BJ (cell line): ENCODE measurements at regions of chr10 and their contacts with region 1.

Region 1: GRCh38 chr10:48608279-48608681 is 3.4 kb upstream of the ARHGAP22 start:
- DNase-seq: no peak
- H3K4me3 ChIP-seq: no peak overlapping the region
- H3K27me3 ChIP-seq: no peaks in the 10 kb centered on the region
- CTCF ChIP-seq: peak; percentile 80

Region 2: DNA sequence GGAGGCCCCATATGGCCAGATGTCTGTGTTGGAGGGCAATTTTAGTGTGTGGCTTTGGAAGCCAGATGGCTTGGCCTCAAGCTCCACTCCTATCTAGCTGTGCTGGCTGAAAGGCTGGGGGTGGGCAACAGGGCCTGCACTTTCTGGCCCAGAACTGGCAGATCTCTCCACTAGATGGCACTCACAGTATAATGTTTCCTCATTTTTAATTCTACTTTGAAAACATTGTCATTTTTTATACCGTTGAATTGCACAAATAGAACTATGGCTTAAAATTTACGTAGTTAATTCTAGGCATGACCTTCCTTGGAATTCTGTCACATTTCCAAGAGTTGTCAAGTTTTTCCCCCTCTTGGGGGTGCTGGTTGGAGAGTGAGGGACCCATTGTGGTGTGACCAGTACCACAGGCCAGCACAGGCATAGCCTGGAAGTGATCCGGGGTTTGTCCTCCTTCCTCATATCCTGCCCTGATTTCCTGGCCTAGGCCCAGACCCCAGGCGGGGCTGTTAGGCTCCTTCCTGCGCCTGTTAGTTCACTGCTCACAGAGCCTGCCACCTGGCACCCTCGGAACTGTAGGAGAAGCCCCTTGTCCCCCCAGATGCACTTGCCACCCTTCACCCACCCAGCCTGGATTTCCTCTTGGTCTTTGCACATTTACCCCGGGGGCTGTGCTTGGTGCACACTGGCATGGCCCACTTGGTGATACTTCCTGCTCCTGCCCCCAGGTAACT is 56.3 kb before region 1 on chr10:
- CTCF ChIA-PET with region 1: interaction called, 22 read pairs
- POLR2A ChIA-PET with region 1: no interaction called
- DNase-seq: no peak
- H3K4me3 ChIP-seq: no peak overlapping the region
- H3K27me3 ChIP-seq: no peaks in the 10 kb centered on the region
- CTCF ChIP-seq: peak; percentile 75

Region 3: GRCh38 chr10:48557511-48558123 is 50.7 kb before region 1 on chr10:
- CTCF ChIA-PET with region 1: interaction called, 22 read pairs
- POLR2A ChIA-PET with region 1: no interaction called
- DNase-seq: no peak
- H3K4me3 ChIP-seq: no peak overlapping the region
- H3K27me3 ChIP-seq: no peaks in the 10 kb centered on the region
- CTCF ChIP-seq: no peak

Region 4: GRCh38 chr10:48589266-48589665 is 19.0 kb before region 1 on chr10:
- CTCF ChIA-PET with region 1: interaction called, 33 read pairs
- POLR2A ChIA-PET with region 1: no interaction called
- DNase-seq: peak; percentile 74
- H3K4me3 ChIP-seq: no peak overlapping the region
- H3K27me3 ChIP-seq: no peaks in the 10 kb centered on the region
- CTCF ChIP-seq: no peak

Region 5: DNA sequence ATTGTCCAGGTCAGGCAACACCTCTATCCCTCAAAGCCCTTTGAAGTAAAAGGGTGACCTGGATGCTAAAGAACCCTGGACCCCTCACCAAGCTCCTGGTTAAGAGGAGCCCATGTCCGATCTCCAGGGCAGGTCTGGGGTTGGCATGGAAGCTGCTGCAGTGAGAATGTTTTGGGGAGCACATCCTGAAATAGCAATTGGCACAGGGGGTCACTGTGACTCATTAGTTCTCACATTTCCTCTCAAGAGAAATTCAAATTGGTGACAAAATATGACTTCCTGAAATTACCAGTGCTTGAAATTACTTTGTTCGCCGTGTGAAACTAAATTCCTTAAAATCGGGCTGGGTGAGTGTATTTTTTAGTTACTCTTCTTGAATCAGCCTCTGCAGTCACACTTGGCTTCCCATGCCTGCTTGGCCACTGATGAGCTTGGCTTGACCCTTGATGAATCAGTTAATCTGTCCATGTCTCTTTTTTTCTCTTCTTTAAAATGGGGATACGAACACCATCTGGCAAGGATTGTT is 15.4 kb after region 1 on chr10:
- CTCF ChIA-PET with region 1: interaction called, 69 read pairs
- POLR2A ChIA-PET with region 1: no interaction called
- DNase-seq: no peak
- H3K4me3 ChIP-seq: no peak overlapping the region
- H3K27me3 ChIP-seq: no peaks in the 10 kb centered on the region
- CTCF ChIP-seq: no peak

Region 6: GRCh38 chr10:48634198-48634983 is 26.1 kb after region 1 on chr10:
- CTCF ChIA-PET with region 1: interaction called, 10 read pairs
- POLR2A ChIA-PET with region 1: no interaction called
- DNase-seq: peak; percentile 31
- H3K4me3 ChIP-seq: no peak overlapping the region
- H3K27me3 ChIP-seq: no peaks in the 10 kb centered on the region
- CTCF ChIP-seq: no peak